Activated T-helper 1 cell treated with anti-CD3 and anti-CD28 coated beads, Interleukin-12 subunit alpha, Interleukin-12 subunit beta, Interleukin-2, Interleukin-4 antibody, amounts not matched to agents 30 ng/mL and 10 ng/mL and 1 ng/mL, durations not matched to agents 14 hours and 24 hours and 36 hours (primary cell): ENCODE measurements at regions of chrX and their contacts with region 1.

Region 1: GRCh38 chrX:16719334-16720084 is at the start of gene SYAP1:
- DNase-seq: peak; percentile 89
- H3K4me3 Mint-ChIP-seq: peak within 1 kb of the TSS; percentile 92
- H3K27ac Mint-ChIP-seq: peak within 1 kb of the TSS; percentile 94
- H3K4me1 Mint-ChIP-seq: peaks cover 16% of the 10 kb centered on the region
- H3K27me3 Mint-ChIP-seq: no peaks in the 10 kb centered on the region
- total RNA-seq, gene SYAP1: 19.5 and 19.7 TPM in 2 replicates

Region 2: DNA sequence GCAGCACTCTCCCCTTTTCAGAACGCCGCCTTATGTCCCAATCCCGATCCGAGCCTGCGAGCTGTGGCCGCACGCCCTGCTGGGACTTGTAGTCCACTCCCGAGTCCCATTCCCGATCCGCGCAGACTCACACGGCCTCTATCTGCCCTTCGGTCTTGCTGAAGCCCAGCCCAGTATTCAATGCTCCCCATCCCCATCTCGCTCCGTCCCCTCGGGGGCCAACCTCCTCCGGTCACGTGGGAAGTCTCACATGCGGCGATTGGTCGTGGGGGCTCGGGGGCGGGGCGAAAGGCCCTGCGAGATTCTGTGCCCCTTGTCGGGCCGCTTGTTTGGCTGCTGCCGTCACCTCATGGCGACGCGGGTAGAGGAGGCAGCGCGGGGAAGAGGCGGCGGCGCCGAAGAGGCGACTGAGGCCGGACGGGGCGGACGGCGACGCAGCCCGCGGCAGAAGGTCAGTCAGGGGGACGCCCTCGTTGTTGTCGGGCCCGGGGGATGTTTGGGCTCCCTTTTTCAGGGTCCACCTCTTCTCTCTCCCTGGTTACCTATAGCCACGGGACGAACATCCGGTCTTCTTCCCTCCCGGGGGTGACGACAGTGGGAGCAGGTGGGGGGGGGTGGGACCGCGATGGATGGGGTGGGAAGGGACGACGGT is 66.8 kb after region 1 on chrX and contains the start of gene TXLNG:
- intact Hi-C with region 1: loop called (anchors 1 kb)
- DNase-seq: peak; percentile 91
- H3K4me3 Mint-ChIP-seq: peak within 1 kb of the TSS; percentile 92
- H3K27ac Mint-ChIP-seq: peak within 1 kb of the TSS; percentile 94
- H3K4me1 Mint-ChIP-seq: peaks cover 11% of the 10 kb centered on the region
- H3K27me3 Mint-ChIP-seq: no peaks in the 10 kb centered on the region
- total RNA-seq, gene TXLNG: 23.8 and 25.4 TPM in 2 replicates

Region 3: GRCh38 chrX:16946361-16946964 is 227.0 kb after region 1 on chrX and contains the start of gene REPS2:
- intact Hi-C with region 1: no loop called
- DNase-seq: peak; percentile 39
- H3K4me3 Mint-ChIP-seq: peak within 1 kb of the TSS; percentile 74
- H3K27ac Mint-ChIP-seq: no peak within 1 kb of the TSS
- H3K4me1 Mint-ChIP-seq: no peaks in the 10 kb centered on the region
- H3K27me3 Mint-ChIP-seq: peaks cover 24% of the 10 kb centered on the region
- total RNA-seq, gene REPS2: not detected in 2 replicates